Uterus (tissue), 4 donors: ENCODE measurements at regions of chr12 and their contacts with region 1.

Region 1: DNA sequence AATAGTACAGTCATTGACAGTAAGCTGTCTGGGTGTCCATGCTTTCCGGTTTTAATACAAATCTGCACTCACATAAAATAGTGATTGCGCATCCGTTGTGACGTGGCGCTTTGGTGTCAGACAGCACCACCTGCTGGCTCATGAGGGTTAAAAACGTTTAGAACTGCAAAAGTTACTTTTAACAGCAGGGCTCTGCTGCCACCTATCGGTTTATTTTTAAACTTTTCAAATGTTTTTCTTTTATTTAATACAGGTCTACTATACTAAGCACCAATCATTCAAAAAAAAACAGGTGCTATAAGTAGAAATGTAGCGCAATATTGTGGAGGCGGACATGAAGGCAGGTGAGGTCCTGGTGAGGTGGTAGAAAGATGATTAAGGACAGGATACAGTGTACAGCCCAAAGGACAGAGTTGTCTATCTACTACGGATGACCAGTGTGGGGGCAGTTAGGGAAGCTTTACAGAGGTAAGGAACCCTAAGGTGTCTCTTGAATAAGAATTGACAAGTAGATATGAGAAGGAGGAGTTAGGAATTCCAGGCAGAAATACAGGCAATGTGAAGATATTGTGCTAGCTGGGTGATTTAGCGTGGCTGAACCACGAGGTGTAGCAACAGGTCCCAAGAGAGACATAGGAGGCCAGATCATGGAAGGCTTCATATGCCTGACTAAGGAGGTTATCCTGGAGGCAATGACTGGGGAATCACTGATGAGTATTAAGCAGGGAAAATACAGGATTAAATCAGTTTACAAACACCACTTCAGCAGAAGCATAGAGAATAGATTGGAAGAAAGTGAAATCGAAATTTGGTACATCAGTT is 91.5 kb upstream of the PRB2 start:
- DNase-seq: peak; percentile 62 to 64
- H3K4me3 ChIP-seq: no peak overlapping the region
- H3K27ac ChIP-seq: no peak overlapping the region
- H3K4me1 ChIP-seq: no peaks in the 10 kb centered on the region
- H3K27me3 ChIP-seq: no peaks in the 10 kb centered on the region
- CTCF ChIP-seq: peak; percentile 82 to 94 (median 87)
- POLR2A ChIP-seq: no peak

Region 2: DNA sequence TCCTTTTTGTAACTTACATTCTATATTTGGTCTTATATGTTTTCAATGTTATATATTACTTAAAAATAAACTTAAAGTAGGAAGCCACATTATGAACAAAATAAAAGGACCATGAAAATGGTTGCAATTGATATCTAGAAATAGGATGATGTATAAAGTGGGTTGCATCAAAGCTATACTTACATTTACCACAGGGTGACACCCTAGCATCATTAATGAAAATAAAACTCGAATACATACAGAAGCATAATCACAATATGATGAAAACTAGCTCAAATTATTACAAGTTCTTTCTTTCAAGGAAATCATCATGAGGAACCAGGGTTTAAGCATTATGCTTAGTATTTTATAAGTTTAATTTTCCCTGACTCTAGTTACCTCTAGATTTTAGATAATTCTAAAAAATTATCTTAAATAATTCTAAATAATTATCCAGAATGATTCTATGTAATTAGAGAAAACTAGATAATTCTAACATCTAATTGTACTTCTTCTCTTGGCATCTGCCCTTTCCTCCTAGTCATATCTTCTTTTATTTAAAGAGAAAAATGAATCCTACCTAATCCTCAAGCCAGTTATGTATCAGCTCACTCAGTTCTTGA is 715.6 kb before region 1 on chr12:
- intact Hi-C with region 1: loop called (anchors 10 kb)
- DNase-seq: no peak
- H3K4me3 ChIP-seq: no peak overlapping the region
- H3K27ac ChIP-seq: no peak overlapping the region
- H3K4me1 ChIP-seq: no peaks in the 10 kb centered on the region
- H3K27me3 ChIP-seq: no peaks in the 10 kb centered on the region
- CTCF ChIP-seq: peak; percentile 52 to 72 (median 62)
- POLR2A ChIP-seq: no peak

Region 3: DNA sequence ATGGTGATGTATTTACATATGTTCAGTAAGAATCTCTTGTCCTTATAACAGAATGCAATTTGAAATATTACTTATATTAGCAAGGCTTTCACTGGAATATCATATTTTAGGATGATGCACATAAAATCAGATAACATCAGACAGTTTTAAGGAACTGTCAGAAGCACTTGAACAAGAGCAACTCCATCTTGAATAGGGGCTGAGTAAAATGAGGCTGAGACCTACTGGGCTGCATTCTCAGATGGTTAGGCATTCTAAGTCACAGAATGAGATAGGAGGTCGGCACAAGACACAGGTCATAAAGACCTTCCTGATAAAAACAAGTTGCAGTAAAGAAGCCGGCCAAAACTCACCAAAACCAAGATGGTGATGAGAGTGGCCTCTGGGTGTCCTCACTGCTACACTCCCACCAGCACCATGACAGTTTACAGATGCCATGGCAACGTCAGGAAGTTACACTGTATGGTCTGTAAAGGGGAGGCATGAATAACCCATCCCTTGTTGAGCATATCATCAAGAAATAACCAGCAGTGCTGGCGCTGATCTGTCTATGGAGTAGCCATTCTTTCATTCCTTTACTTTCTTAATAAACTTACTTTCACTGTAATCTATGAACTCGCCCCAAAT is 135.1 kb after region 1 on chr12:
- intact Hi-C with region 1: no loop called
- DNase-seq: no peak
- H3K4me3 ChIP-seq: no peak overlapping the region
- H3K27ac ChIP-seq: no peak overlapping the region
- H3K4me1 ChIP-seq: no peaks in the 10 kb centered on the region
- H3K27me3 ChIP-seq: no peaks in the 10 kb centered on the region
- CTCF ChIP-seq: no peak
- POLR2A ChIP-seq: no peak